Posterior vena cava (tissue), 2 donors: ENCODE measurements at regions of chr14 and their contacts with region 1.

Region 1: GRCh38 chr14:64340560-64341196 is 46.5 kb upstream of the ESR2 start:
- DNase-seq: no peak

Region 2: GRCh38 chr14:63499701-63500250 is 840.9 kb before region 1 on chr14:
- intact Hi-C with region 1: no loop called
- DNase-seq: no peak

Region 3: DNA sequence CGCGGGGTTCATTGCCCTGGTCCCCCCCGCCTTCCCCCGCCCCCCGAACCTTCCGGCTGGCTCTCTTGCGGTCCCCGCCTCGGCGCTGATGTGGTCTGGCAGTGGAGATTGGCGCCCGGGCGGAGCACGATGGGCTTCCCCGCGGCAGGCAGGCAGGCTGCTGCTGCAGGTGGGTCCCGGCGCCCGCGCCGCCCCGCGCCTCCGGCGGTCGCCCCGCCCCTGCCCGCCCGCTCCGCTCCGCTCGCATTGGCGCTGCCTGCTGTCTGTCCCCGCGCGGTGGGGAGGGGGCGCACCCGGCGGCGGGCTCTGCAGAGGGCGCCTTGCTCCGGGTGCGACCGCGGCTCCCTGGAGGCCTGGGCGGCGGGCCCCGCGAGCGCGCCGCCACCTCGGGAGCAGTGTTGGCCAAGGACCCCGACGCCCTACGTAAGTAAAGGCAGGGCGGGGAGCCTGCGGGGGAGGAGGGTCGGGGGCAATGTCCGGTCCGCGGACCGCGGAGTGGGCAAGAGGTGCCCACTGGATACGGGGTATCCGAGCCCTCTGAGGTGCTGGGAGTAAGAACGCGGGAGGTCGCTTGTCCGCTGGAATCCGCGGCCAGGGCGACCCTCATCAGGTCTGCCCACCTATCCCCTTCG is 124.6 kb after region 1 on chr14 and contains the start of gene AKAP5:
- intact Hi-C with region 1: loop called (anchors 10 kb)
- DNase-seq: no peak
- total RNA-seq, gene AKAP5: 2.4 to 3.1 TPM

Region 4: DNA sequence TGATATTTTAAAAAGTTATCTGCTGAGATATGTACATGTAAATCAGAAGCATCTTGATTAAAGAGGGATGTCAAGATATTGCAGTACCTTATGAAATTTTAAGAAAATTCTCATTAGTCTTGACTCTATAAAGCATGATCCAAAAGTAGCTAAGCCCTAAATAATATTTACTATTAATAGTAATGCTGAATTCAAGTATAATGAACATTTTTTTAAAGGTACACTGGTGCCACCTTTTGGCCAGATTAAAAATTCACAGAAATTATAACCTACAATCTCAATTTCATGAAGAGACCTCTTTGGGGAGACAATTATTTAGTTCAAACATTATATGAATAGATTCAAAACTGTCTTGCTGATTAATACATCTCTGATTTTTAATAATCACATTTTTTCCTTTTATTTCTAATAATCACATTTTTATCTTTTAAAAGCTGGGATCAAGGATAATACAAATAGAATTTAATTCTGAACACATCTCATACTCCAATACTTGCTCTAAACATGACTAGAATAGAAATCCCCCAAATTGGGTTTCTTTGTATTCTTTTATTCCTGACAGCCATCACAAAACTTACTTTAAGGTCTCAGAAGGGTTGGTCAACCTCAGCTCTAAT is 138.1 kb after region 1 on chr14:
- intact Hi-C with region 1: loop called in 1 of 2 experiments (anchors 10 kb)
- DNase-seq: no peak